PC-3 (cell line): ENCODE measurements at regions of chr6 and their contacts with region 1.

Region 1: DNA sequence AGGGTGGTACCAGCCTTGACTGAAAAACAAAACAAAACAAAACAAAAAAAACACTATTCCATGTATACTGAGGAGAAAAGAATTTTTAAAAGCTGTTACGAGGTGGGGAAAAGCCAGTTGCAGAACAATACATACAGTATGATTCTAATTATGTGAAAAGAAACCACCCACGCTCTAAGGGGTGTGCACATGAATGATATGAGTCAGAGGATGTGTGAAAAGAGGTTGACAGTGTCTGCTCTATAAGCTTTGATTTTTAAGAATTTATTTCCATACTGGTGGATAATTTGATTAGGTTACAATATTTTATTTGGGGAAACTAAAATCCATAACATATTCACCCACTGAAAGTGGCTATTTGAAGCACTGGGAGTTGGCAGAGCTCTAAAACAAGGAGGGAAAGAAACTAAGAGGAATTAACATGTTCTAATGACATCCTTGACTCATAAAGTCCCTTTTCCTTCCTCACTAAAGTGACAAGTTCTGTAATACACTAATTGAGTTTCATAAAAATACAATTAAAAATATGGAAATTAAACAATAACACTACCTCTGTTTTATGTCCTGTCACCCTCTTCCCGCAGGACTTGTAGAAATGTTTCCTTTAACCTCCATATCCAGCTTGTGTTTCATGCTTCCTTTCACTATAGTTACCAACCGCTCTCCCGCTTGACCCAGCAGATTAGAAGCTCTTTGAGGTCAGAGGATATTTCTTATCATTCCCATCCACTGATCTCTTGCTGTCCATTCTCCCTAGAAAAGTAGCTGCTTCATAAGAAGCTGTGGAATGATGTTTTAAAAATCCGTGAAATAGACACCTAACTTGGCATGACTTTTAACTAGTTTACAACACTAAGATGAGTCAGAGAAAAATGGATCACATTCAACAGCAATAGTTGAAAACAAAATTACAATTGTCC is 118.6 kb upstream of the CCDC28A start:
- DNase-seq: peak; percentile 3
- ATAC-seq: peak; percentile 64
- H3K4me3 ChIP-seq: no peak overlapping the region
- H3K27ac ChIP-seq: no peak overlapping the region
- H3K4me1 ChIP-seq: peaks cover 16% of the 10 kb centered on the region
- H3K27me3 ChIP-seq: no peaks in the 10 kb centered on the region
- CTCF ChIP-seq: no peak

Region 2: DNA sequence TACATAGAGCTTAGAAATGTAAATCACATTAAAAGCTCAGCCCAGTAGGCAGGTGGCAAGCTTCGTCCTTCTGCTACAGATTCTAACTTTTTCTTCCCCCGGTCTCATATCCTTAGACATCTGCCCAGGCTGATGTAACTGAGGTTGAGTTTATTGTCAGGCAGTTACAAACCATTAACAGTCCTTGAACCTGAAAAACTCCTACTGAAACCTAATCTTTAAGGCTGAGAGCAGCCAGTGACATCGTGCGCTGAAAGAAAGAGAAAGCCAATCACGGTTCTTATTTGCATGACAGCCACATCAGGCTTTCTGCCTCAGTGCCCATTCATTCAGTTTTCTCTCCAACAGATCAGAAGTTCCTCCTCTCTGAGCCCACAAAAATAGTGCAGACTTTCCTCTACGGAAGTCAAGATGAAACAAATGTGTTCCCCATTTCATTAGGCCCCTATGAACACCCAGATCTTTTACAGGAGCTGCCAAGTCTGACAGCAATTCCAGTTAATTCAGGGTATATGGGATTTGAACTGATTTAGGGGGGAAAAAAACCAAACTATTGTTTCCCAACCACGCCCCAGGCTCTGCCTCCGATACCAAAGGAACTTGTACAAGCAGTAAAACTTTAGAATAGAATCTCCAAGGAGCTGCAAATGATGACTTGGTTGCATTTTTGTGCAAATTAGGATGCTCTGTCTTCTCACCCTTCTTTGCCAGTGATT is 155.5 kb before region 1 on chr6 and contains the start of gene NHSL1:
- CTCF ChIA-PET with region 1: no interaction called
- POLR2A ChIA-PET with region 1: no interaction called
- intact Hi-C with region 1: no loop called
- DNase-seq: no peak
- ATAC-seq: no peak
- H3K4me3 ChIP-seq: no peak within 1 kb of the TSS
- H3K27ac ChIP-seq: no peak within 1 kb of the TSS
- H3K4me1 ChIP-seq: no peaks in the 10 kb centered on the region
- H3K27me3 ChIP-seq: no peaks in the 10 kb centered on the region
- CTCF ChIP-seq: no peak
- total RNA-seq, gene NHSL1: 4.8 and 6.1 TPM in 2 replicates

Region 3: GRCh38 chr6:138622967-138623366 is 32.0 kb before region 1 on chr6:
- CTCF ChIA-PET with region 1: no interaction called
- POLR2A ChIA-PET with region 1: interaction called, 12 read pairs
- intact Hi-C with region 1: no loop called
- DNase-seq: no peak
- ATAC-seq: no peak
- H3K4me3 ChIP-seq: no peak overlapping the region
- H3K27ac ChIP-seq: no peak overlapping the region
- H3K4me1 ChIP-seq: no peaks in the 10 kb centered on the region
- H3K27me3 ChIP-seq: no peaks in the 10 kb centered on the region
- CTCF ChIP-seq: no peak